Activated B cell treated with CpG ODN at 0.5 μM for 24 hours (primary cell): ENCODE measurements at regions of chr7 and their contacts with region 1.

Region 1: GRCh38 chr7:73342645-73343044 is 14.7 kb downstream of the FKBP6 start:
- DNase-seq: no peak
- ATAC-seq: no peak
- H3K4me3 Mint-ChIP-seq: no peak overlapping the region
- H3K27ac Mint-ChIP-seq: no peak overlapping the region
- H3K4me1 Mint-ChIP-seq: peaks cover 2% of the 10 kb centered on the region
- H3K27me3 Mint-ChIP-seq: peaks cover 11% of the 10 kb centered on the region
- CTCF ChIP-seq: no peak

Region 2: DNA sequence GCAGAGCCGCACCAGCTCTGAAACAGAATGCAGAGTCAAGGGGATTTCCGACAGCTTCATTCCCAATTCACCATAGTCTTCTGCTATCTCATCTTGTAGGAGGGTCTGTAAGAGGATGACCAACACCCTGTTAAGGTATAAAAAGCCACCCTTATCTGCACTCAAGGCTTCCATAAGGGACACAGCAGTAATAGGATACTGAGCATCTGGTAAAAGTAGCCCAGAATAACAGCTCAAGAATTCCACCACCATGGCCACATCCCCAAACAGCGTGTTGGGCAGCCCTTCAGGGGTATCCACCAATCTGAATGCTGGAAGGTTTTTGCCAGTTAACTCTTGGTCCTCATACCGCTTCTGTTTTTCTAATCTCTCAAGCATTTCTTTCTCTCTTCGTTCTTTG is 134.7 kb after region 1 on chr7:
- CTCF ChIA-PET with region 1: no interaction called
- POLR2A ChIA-PET with region 1: no interaction called
- intact Hi-C with region 1: no loop called
- DNase-seq: no peak
- ATAC-seq: no peak
- H3K4me3 Mint-ChIP-seq: no peak overlapping the region
- H3K27ac Mint-ChIP-seq: no peak overlapping the region
- H3K4me1 Mint-ChIP-seq: peaks cover 15% of the 10 kb centered on the region
- H3K27me3 Mint-ChIP-seq: no peaks in the 10 kb centered on the region
- CTCF ChIP-seq: no peak

Region 3: GRCh38 chr7:74617180-74617744 is 1274.6 kb after region 1 on chr7:
- CTCF ChIA-PET with region 1: no interaction called
- POLR2A ChIA-PET with region 1: interaction called, 11 read pairs
- intact Hi-C with region 1: no loop called
- DNase-seq: peak; percentile 20
- ATAC-seq: peak; percentile 53
- H3K4me3 Mint-ChIP-seq: peak overlapping the region; percentile 72
- H3K27ac Mint-ChIP-seq: peak overlapping the region; percentile 85
- H3K4me1 Mint-ChIP-seq: peaks cover 30% of the 10 kb centered on the region
- H3K27me3 Mint-ChIP-seq: no peaks in the 10 kb centered on the region
- CTCF ChIP-seq: no peak